Tibial artery (tissue), 4 donors: ENCODE measurements at regions of chr16 and their contacts with region 1.

Region 1: DNA sequence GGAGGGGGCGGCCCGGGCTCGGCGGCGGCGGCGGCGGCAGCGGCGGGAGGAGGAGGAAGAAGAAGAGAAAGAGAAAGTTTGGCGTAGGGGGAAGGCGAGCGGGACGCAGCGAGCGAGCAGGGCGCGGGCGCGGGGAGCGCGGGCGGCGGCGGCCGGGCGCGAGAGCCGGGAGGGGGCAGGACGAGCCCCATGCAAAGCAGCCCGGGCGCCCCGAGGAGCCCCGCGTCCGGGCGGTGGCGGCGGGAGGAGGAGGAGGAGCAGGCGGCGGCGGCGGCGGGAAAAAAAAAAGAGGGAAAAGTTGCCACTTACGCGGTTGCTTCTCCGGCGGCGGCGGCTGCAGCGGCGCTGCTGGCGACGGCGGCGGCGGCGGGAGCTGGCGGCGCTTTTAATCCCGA is 10.3 kb upstream of the ZFHX3 start:
- DNase-seq: peak in 1 of 2 donors; percentile 21
- H3K4me3 ChIP-seq: peak overlapping the region; percentile 84 to 88
- H3K27ac ChIP-seq: peak overlapping the region; percentile 99
- H3K4me1 ChIP-seq: peaks cover 0 to 32% (median 24%) of the 10 kb centered on the region in 4 donors
- H3K27me3 ChIP-seq: no peaks in the 10 kb centered on the region
- CTCF ChIP-seq: no peak

Region 2: DNA sequence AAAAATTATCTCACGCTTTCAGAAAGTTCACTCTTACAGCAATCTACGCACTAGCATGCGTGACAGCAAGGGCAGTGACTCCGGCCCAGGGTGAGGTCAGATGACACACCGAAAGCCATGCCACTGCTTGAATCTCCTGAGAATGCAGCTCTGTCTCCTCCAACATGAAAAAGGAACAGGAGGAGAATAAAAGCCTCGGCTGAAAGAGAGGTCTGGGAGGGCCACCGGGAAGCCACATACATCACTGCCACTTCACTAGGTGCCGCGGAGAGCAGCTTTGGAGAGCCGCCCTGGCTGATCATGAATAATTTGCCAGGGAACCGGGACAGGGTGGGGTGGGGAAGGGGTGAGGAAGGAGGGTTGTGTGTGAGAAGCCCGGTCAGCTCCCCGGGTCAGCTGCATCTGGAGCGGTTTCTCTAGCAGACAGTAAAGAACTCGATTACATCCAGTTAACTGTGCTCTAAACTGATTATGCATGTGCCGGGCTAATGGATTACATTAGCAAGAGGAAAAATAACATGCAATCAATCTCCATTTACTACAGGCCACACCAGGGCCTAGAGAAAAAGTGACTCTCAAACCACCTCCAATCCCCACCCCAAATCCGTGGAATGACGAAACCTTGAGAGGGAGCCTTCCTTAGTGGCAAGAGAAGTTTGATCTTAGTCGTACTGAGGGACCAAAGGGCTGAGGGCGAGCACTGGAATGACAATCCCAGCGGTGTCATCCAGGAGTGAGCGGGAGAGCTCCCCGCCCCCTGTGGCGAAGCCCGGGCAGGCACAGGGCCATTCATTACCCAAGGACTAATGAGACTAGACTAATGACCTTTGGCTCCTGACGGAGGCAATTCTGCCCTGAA is 110.6 kb before region 1 on chr16:
- intact Hi-C with region 1: loop called (anchors 10 kb)
- DNase-seq: peak in 1 of 2 donors; percentile 80
- H3K4me3 ChIP-seq: peak overlapping the region; percentile 3 to 13
- H3K27ac ChIP-seq: peak overlapping the region; percentile 84 to 87
- H3K4me1 ChIP-seq: peaks cover 0 to 97% (median 34%) of the 10 kb centered on the region in 4 donors
- H3K27me3 ChIP-seq: no peaks in the 10 kb centered on the region
- CTCF ChIP-seq: no peak

Region 3: DNA sequence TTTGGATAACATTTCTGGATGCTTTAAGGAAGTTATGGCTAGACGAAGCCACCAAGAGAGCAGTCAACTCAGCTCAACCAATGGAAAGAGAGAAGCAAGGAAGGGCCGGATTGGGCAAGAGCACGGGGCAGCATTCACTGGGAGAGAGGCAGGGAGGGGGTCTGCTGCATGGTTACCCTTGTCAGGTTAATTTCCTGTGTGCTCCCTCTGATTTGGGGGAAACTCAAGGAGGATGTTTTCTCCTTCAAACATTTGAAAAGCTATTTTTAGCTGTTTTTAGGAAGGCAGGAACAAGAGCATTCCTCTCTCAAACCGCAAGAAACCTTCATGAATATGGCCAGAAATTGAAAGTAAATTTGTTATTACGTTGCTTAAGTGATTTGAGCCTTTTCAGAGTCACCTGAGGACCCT is 108.2 kb after region 1 on chr16:
- intact Hi-C with region 1: no loop called
- DNase-seq: peak in 1 of 2 donors; percentile 47
- H3K4me3 ChIP-seq: peak overlapping the region; percentile 41 to 43
- H3K27ac ChIP-seq: peak overlapping the region; percentile 68 to 73
- H3K4me1 ChIP-seq: peaks cover 0 to 23% (median 12%) of the 10 kb centered on the region in 4 donors
- H3K27me3 ChIP-seq: no peaks in the 10 kb centered on the region
- CTCF ChIP-seq: no peak

Region 4: GRCh38 chr16:73490302-73490701 is 432.1 kb after region 1 on chr16:
- intact Hi-C with region 1: no loop called
- DNase-seq: no peak
- H3K4me3 ChIP-seq: no peak overlapping the region
- H3K27ac ChIP-seq: no peak overlapping the region
- H3K4me1 ChIP-seq: no peaks in the 10 kb centered on the region
- H3K27me3 ChIP-seq: no peaks in the 10 kb centered on the region
- CTCF ChIP-seq: no peak